ENCODE measurements at regions of chr6 and their contacts with region 1.

Region 1: DNA sequence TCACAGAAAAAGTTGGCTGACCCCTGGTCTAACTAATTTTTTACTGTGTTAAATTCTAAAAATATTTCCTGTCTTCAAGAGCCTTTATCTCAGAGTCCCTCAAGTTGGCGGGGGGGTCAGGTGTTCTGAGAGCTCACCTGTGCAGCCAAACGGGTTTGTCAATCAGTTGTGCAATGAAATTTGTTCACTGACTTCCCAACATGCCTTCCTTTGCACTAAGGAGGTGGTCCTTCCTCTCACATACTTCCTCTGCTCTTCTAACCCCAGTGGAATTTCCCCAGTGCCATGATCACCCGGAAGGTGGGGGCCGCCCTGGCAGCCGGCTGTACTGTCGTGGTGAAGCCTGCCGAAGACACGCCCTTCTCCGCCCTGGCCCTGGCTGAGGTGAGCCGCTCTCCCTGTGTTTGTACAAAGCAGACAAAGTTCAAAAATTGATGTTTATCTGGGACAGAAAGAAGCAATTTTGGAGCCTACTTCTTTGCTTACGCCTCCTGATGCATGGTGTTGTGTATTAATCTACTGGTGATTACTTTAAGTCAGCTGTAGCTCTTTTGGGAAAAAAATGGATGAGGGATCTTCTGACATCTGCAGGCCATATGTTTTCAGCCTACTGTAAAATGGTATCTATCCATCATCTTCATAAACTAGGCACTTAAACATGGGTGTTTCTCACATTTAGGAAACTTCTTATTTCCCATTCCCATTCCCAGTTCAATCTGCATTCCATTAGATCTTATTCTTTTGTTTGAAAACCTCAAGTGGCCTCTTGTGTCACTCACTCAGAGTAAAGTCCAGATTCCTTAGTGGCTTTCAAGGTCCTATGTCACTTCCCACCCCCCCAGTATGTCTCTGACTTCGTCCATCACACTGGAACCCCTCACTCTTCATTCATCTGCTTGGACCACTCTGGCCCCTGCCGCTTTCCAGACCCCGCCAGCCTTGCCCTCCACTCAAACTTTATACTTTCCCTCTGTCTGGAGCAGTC is 10.1 kb downstream of the ALDH5A1 start:
- DNase-seq: peak; percentile 96
- H3K4me3 ChIP-seq: peak overlapping the region; percentile 21
- H3K4me3 Mint-ChIP-seq: peak overlapping the region; percentile 81
- H3K27ac Mint-ChIP-seq: peak overlapping the region; percentile 95
- H3K4me1 ChIP-seq: peaks cover 39% of the 10 kb centered on the region
- H3K4me1 Mint-ChIP-seq: peaks cover 50% of the 10 kb centered on the region
- H3K27me3 ChIP-seq: no peaks in the 10 kb centered on the region
- H3K27me3 Mint-ChIP-seq: no peaks in the 10 kb centered on the region
- CTCF ChIP-seq: no peak

Region 2: DNA sequence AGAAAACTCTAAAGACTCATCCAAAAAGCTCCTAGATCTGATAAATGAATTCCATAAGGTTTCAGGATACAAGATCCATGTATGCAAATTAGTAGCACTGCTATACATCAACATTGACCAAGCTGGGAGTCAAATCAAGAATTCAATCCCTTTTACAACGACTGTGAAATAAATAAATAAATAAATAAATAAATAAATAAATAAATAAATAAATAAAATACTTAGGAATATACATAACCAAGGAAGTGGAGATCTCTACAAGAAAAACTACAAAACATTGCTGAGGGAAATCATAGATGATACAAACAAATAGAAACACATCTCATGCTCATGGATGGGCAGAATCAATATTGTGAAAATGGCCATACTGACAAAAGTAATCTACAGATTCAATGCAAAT is 510.9 kb before region 1 on chr6:
- CTCF ChIA-PET with region 1: no interaction called
- POLR2A ChIA-PET with region 1: no interaction called
- intact Hi-C with region 1: no loop called
- DNase-seq: no peak
- H3K4me3 ChIP-seq: no peak overlapping the region
- H3K4me3 Mint-ChIP-seq: no peak overlapping the region
- H3K27ac Mint-ChIP-seq: no peak overlapping the region
- H3K4me1 ChIP-seq: no peaks in the 10 kb centered on the region
- H3K4me1 Mint-ChIP-seq: no peaks in the 10 kb centered on the region
- H3K27me3 ChIP-seq: no peaks in the 10 kb centered on the region
- H3K27me3 Mint-ChIP-seq: peaks cover 1% of the 10 kb centered on the region
- CTCF ChIP-seq: no peak

Region 3: DNA sequence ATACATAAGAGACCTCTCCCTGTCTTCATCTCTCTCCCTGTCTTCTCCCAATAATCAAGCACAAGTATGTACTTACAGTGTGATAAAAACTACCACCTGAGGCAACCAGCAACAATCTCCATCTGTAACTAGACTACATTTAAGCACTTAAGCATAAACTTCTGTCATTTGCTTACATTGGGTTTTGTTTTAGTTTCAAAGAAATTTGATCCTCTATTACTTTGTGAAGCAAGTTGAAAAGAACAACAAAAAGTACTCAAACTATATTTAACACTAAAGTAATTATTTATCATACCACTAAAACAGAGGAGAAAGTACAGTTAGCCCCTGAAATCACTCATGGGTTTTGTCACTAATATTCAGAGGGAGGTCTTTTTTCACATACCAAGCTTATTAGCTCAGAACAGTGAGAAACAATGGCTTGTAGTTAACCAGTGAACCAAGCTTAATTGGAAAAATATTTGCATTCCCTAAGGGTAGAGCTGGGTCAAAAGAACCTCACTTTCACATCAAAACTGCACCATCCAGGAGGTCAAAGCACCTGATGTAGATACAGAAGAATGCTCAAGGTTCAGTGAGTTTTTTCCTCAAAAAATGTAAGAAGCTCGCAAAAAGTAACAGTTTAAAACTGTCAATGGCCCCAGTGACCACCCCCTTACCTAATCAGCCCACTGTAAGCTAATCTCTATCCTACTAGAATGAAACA is 181.1 kb before region 1 on chr6:
- CTCF ChIA-PET with region 1: no interaction called
- POLR2A ChIA-PET with region 1: no interaction called
- intact Hi-C with region 1: loop called (anchors 10 kb)
- DNase-seq: no peak
- H3K4me3 ChIP-seq: no peak overlapping the region
- H3K4me3 Mint-ChIP-seq: peak overlapping the region; percentile 28
- H3K27ac Mint-ChIP-seq: peak overlapping the region; percentile 45
- H3K4me1 ChIP-seq: peaks cover 83% of the 10 kb centered on the region
- H3K4me1 Mint-ChIP-seq: peaks cover 57% of the 10 kb centered on the region
- H3K27me3 ChIP-seq: no peaks in the 10 kb centered on the region
- H3K27me3 Mint-ChIP-seq: no peaks in the 10 kb centered on the region
- CTCF ChIP-seq: no peak

Region 4: DNA sequence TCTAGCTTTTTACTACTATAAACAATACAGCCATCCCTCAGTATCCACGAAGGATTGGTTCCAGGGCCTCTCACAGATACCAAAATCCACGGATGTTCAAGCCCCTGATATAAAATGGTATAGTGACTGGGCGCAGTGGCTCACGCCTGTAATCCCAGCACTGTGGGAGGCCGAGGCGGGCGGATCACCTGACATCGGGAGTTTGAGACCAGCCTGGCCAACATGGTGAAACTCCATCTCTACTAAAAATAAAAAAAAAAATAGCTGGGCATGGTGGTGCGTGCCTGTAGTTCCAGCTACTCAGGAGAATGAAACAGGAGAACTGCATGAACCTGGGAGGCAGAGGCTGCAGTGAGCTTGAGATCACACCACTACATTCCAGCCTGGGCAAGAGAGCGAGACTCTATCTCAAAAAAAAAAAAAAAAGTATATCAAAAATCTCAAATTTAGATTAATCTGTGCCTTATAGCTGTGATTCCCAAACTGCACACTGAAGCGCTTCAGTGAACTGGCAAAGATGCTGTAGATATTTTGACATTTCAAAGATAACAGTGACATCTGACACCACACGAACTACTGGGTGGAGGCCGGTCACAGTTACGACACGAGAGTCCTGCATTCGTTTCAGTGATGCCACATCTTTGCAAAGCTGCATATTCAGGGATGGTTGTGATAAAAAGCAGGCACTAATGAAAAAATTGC is 63.8 kb before region 1 on chr6:
- CTCF ChIA-PET with region 1: no interaction called
- POLR2A ChIA-PET with region 1: no interaction called
- intact Hi-C with region 1: no loop called
- DNase-seq: no peak
- H3K4me3 ChIP-seq: no peak overlapping the region
- H3K4me3 Mint-ChIP-seq: no peak overlapping the region
- H3K27ac Mint-ChIP-seq: no peak overlapping the region
- H3K4me1 ChIP-seq: no peaks in the 10 kb centered on the region
- H3K4me1 Mint-ChIP-seq: no peaks in the 10 kb centered on the region
- H3K27me3 ChIP-seq: no peaks in the 10 kb centered on the region
- H3K27me3 Mint-ChIP-seq: no peaks in the 10 kb centered on the region
- CTCF ChIP-seq: no peak

Region 5: DNA sequence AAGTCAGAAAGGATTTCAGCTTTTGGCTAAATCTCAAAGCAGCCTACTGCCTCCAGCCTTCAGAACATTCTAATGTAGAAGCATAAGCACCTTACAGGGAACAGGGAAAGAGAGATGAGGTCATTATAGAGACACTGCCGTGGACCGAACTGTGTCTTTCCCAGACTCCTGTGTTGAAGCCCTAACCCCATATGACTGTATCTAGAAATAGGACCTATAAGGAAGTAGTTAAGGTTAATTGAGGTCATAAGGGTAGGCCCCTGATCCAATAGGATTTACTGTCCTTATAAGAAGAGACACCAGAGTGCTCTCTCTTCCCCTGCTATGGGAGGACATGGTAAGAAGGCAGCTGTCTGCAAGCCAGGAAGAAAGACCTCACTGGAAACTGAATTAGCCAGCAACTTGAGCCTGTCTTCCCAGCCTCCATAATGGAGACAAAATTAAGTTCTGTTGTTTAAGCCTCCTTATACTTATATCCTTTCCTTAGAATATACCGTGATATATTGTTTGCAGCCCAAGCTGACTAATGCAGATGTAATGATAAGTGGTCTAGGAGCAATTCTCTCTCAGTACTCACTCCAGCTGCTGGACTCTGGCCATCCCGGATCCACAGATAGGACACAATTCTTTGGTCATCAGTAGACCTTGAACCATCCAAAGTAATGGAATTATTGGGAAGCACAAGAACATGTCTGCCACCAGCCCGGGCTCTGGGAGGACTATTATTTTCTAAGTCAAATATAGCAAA is 61.3 kb after region 1 on chr6:
- CTCF ChIA-PET with region 1: no interaction called
- POLR2A ChIA-PET with region 1: no interaction called
- intact Hi-C with region 1: no loop called
- DNase-seq: no peak
- H3K4me3 ChIP-seq: no peak overlapping the region
- H3K4me3 Mint-ChIP-seq: no peak overlapping the region
- H3K27ac Mint-ChIP-seq: no peak overlapping the region
- H3K4me1 ChIP-seq: no peaks in the 10 kb centered on the region
- H3K4me1 Mint-ChIP-seq: no peaks in the 10 kb centered on the region
- H3K27me3 ChIP-seq: no peaks in the 10 kb centered on the region
- H3K27me3 Mint-ChIP-seq: peaks cover 3% of the 10 kb centered on the region
- CTCF ChIP-seq: no peak

Region 6: GRCh38 chr6:24581084-24581669 is 76.3 kb after region 1 on chr6:
- CTCF ChIA-PET with region 1: no interaction called
- POLR2A ChIA-PET with region 1: no interaction called
- intact Hi-C with region 1: no loop called
- DNase-seq: peak; percentile 78 to 80
- H3K4me3 ChIP-seq: no peak overlapping the region
- H3K4me3 Mint-ChIP-seq: no peak overlapping the region
- H3K27ac Mint-ChIP-seq: no peak overlapping the region
- H3K4me1 ChIP-seq: 0 out of 2 replicates have a peak, but pooled peaks cover 5% of the 10 kb centered on the region
- H3K4me1 Mint-ChIP-seq: peaks cover 8% of the 10 kb centered on the region
- H3K27me3 ChIP-seq: no peaks in the 10 kb centered on the region
- H3K27me3 Mint-ChIP-seq: no peaks in the 10 kb centered on the region
- CTCF ChIP-seq: peak; percentile 68 to 85

Region 7: DNA sequence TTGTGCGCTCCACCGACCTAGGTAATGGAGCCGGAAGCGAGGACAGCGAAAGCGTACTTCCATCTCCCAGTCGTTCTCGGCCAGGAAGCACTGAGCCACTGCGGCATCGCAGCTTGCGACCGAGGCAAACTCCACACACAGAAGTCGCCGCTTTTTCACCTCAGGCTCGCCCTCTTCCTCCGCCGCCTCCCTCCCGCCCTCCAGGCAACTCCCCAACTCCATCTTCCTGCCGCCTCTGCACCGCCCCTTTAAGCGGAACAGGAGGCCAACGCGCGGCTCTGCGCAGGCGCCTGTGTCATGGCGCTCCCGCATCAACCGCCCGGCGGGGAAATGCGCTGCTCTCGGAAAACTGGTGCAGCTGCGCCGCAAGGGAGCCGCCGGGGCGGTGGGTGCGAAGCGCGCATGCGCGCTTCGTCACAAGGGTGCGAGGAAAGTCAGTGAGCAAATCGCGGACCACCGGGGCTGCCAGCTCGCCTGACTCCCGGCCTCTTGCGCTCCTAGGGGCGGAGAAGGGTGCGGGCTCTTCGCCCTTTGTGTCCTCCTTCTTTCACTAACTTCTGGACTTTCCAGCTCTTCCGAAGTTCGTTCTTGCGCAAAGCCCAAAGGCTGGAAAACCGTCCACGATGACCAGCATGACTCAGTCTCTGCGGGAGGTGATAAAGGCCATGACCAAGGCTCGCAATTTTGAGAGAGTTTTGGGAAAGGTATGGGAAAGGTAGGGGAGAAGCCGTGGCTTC is 161.9 kb after region 1 on chr6 and contains the starts of genes ACOT13 and TDP2:
- CTCF ChIA-PET with region 1: no interaction called
- POLR2A ChIA-PET with region 1: no interaction called
- intact Hi-C with region 1: loop called (anchors 1 kb)
- DNase-seq: peak; percentile 94 to 96
- H3K4me3 ChIP-seq: peak within 1 kb of the TSS; percentile 90
- H3K4me3 Mint-ChIP-seq: peak within 1 kb of the TSS; percentile 85
- H3K27ac Mint-ChIP-seq: peak within 1 kb of the TSS; percentile 94
- H3K4me1 ChIP-seq: peaks cover 29% of the 10 kb centered on the region
- H3K4me1 Mint-ChIP-seq: peaks cover 32% of the 10 kb centered on the region
- H3K27me3 ChIP-seq: no peaks in the 10 kb centered on the region
- H3K27me3 Mint-ChIP-seq: no peaks in the 10 kb centered on the region
- CTCF ChIP-seq: peak; percentile 52 to 62
- total RNA-seq, gene ACOT13: 55.6 and 63.1 TPM in 2 replicates
- total RNA-seq, gene TDP2: 46.7 and 47.2 TPM in 2 replicates

Measured in Caco-2 (cell line).